Endothelial cell of umbilical vein (primary cell): ENCODE measurements at regions of chr5 and their contacts with region 1.

Region 1: GRCh38 chr5:42057254-42057690 is 132.2 kb downstream of the FBXO4 start:
- DNase-seq: peak; percentile 51
- H3K4me3 ChIP-seq: no peak overlapping the region
- H3K27ac ChIP-seq: no peak overlapping the region
- H3K4me1 ChIP-seq: no peaks in the 10 kb centered on the region
- H3K27me3 ChIP-seq: no peaks in the 10 kb centered on the region
- CTCF ChIP-seq: peak; percentile 65 to 72
- POLR2A ChIP-seq: no peak

Region 2: DNA sequence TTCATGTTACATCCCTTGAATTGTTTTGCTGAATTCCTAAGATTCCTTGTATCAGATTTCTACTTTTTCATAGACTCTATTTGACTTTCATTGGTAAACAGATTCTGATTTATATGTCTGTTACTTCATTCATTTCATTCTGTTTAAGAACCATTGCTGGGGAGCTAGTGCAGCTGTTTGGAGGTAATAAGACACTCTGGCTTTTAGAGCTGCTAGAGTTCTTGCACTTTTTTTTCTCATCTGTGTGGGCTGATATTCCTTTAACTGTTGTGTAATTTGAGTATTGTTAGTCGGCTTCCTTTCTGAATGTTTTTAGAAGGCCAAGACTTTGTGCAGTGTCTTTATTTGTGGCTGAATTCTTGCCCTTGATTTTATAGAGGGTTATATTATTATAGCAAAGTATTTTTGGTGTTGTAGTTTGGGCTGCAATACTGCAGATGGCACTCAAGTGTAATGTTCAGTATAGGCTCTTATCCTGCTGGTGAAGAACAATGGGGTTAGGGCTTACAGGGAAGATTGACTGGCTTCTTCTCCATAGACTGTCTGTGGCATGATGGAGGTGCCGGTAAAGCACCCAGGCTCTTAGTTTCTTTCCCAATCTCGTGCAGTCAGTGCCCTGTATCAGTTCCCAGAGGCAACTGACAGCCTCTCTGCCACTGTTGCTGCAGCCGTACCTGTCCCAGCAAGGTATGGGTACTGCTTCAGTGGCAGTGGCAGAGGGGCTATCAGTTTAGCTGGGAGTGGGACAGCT is 349.2 kb before region 1 on chr5:
- CTCF ChIA-PET with region 1: interaction called, 16 read pairs
- POLR2A ChIA-PET with region 1: no interaction called
- dilution Hi-C with region 1: no loop called
- intact Hi-C with region 1: loop called (anchors 5 kb)
- DNase-seq: peak; percentile 57
- H3K4me3 ChIP-seq: no peak overlapping the region
- H3K27ac ChIP-seq: no peak overlapping the region
- H3K4me1 ChIP-seq: no peaks in the 10 kb centered on the region
- H3K27me3 ChIP-seq: peaks cover 4 to 16% of the 10 kb centered on the region in 2 experiments
- CTCF ChIP-seq: peak; percentile 51 to 52
- POLR2A ChIP-seq: no peak

Region 3: DNA sequence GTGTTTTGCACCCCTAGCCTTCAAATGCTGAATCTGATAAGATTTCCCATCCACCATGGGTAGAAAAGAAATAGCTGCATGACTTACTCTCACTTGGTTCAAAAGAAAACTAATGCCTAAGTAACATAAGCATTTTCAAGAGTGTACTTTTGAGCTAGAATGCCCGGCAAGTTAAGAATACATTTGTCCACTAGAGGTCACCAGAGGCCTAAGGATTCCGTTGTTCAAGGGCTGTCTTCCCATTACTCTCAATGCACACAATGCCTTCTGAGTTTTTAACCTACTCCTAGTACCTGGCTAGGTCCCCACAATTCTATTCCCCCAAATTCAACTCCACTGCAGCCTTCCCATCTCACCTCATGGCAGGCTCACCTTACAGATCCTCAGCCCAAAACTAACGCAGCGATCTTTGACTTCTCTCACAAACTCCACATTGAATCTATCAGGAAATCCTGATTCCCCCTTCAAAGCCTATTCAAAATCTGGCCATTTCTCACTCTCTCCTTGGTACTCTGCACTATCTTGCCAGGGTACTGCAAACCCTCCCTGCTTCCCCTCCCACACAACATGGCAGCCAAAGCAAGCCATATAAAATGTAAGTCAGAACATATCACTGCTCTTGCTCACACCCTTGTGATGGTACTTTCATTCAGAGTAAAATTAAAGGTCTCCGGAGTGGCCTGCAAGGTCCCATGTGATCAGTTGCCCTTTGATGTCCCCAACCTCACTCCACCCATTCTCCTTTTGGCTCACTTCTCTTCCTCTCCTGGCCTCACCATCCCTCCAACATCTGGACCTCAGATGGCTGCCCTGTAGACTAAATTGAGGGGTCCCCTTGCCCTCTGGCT is 200.4 kb before region 1 on chr5:
- CTCF ChIA-PET with region 1: interaction called, 571 read pairs
- POLR2A ChIA-PET with region 1: no interaction called
- dilution Hi-C with region 1: no loop called
- intact Hi-C with region 1: loop called (anchors 1 kb)
- DNase-seq: peak; percentile 77
- H3K4me3 ChIP-seq: no peak overlapping the region
- H3K27ac ChIP-seq: no peak overlapping the region
- H3K4me1 ChIP-seq: no peaks in the 10 kb centered on the region
- H3K27me3 ChIP-seq: no peaks in the 10 kb centered on the region
- CTCF ChIP-seq: peak; percentile 61
- POLR2A ChIP-seq: no peak

Region 4: DNA sequence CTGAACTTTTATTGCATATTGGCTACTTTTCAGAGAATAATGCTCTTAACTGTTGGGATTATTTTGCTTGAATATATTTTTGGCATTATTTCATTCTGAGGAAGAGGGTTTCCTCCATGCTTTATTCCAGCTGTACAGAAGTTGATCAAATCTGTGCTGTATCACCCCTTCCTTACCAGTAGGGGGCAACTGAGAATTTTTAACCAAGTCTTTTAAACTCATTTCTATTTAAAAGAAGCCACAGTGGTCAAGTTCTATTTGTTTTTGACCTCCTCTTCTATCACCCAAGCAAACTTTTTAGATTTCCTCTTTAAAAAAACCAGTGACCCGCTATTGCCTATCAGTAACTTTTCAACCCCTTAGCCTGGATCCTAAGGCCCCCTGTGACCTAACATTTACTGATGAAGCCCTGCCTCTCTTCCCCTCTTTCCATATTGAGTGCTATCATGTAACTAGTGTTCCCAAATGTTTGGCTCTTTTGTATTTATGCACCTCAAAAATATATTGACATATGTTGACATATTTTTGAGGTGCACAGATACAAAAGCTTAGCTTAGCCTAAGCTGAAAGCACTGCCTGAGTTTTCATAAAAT is 51.6 kb before region 1 on chr5:
- CTCF ChIA-PET with region 1: interaction called, 13 read pairs
- POLR2A ChIA-PET with region 1: no interaction called
- dilution Hi-C with region 1: no loop called
- intact Hi-C with region 1: no loop called
- DNase-seq: peak; percentile 21
- H3K4me3 ChIP-seq: no peak overlapping the region
- H3K27ac ChIP-seq: no peak overlapping the region
- H3K4me1 ChIP-seq: no peaks in the 10 kb centered on the region
- H3K27me3 ChIP-seq: no peaks in the 10 kb centered on the region
- CTCF ChIP-seq: peak; percentile 49 to 60
- POLR2A ChIP-seq: no peak

Region 5: GRCh38 chr5:42043400-42043799 is 13.9 kb before region 1 on chr5:
- CTCF ChIA-PET with region 1: interaction called, 12 read pairs
- POLR2A ChIA-PET with region 1: no interaction called
- dilution Hi-C with region 1: no loop called
- intact Hi-C with region 1: no loop called
- DNase-seq: no peak
- H3K4me3 ChIP-seq: no peak overlapping the region
- H3K27ac ChIP-seq: no peak overlapping the region
- H3K4me1 ChIP-seq: no peaks in the 10 kb centered on the region
- H3K27me3 ChIP-seq: no peaks in the 10 kb centered on the region
- CTCF ChIP-seq: no peak
- POLR2A ChIP-seq: no peak

Region 6: DNA sequence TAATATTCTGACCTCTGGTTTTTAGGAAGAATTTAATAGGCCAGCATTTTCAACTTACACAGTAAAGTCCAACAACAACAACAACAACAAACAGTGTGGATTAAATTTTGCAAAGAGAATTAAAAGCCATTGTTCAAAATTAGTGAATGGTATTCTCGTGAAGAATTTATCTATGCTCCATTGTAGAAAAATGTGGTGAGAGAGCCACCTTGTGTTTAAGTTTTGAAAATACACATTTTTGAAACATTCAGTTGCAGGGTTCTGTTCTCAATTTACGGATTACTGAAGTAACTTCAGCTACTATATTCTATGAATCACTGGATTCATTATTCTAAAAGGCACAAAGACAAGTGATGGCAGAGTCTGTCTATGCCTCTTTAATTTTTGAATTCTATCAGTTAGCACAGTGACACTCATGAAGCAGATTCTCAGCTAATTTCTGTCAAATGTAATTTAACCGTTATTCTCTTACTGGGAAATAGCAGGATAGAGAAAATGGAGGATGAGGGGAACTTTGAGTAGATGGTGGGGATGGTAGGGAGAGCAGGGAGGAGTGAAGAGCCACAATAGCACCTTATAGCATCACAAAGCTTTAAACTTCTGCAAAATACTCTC is 710.3 kb after region 1 on chr5:
- CTCF ChIA-PET with region 1: interaction called, 44 read pairs
- POLR2A ChIA-PET with region 1: no interaction called
- dilution Hi-C with region 1: no loop called
- intact Hi-C with region 1: loop called (anchors 5 kb)
- DNase-seq: peak; percentile 39
- H3K4me3 ChIP-seq: no peak overlapping the region
- H3K27ac ChIP-seq: no peak overlapping the region
- H3K4me1 ChIP-seq: no peaks in the 10 kb centered on the region
- H3K27me3 ChIP-seq: no peaks in the 10 kb centered on the region
- CTCF ChIP-seq: peak; percentile 19 to 20
- POLR2A ChIP-seq: no peak